ENCODE measurements at regions of chr19 and their contacts with region 1.

Region 1: DNA sequence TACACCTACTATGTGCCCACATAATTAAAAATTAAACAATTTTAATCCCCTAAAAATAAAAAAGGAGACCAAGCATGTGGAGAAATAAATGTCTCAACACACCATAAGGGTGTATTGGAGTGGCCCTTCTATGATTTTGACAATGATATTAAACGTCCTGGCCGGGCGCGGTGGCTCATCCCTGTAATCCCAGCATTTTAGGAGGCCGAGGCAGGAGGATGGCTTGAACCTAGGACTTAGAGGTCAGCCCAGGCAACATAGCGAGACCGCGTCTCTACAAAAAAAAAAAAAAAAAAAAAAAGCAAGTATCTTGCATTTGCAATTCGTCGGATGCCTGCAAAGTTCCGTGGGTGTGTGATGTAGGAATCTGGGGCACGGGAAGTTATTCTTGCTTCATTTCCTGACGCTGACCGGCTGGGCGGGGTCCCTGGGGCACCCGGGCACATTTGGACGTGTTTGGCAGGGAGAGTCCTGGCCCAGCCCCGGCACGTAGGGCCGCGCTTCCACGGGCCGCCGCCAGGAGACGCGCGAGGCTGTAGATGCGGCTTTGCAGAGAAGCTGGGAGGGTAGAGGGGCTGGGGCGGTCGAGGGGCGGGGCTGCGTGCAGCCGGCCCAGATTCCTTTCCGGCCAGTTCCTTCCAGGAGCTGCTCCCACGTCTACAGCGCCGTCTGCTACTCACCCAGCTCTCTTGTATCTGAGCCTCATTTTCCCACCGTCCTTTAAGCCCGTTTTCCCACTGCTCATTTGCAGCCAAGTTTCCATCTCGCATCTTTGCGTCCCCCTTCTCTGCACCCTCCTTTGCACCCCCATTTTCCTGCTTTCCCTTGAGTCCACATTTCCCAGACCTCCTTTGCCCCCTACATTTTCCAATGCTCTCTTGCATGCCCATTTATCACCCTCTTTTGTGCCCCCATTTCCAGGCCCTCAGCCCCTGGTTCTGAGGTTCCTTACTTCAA is 2.2 kb upstream of the TSPAN16 start:
- DNase-seq: peak in 1 of 2 donors; percentile 97
- H3K4me3 ChIP-seq: peak overlapping the region in 1 of 2 donors; percentile 12
- H3K27ac ChIP-seq: peak overlapping the region; percentile 52
- H3K4me1 ChIP-seq: peaks cover 26% of the 10 kb centered on the region
- H3K27me3 ChIP-seq: no peaks in the 10 kb centered on the region
- CTCF ChIP-seq: peak; percentile 97 to 99 (median 97)
- POLR2A ChIP-seq: peak in 1 of 2 donors; percentile 14

Region 2: GRCh38 chr19:11234486-11235075 is 59.1 kb before region 1 on chr19:
- intact Hi-C with region 1: no loop called
- DNase-seq: no peak
- H3K4me3 ChIP-seq: no peak overlapping the region
- H3K27ac ChIP-seq: no peak overlapping the region
- H3K4me1 ChIP-seq: no peaks in the 10 kb centered on the region
- H3K27me3 ChIP-seq: no peaks in the 10 kb centered on the region
- CTCF ChIP-seq: no peak
- POLR2A ChIP-seq: no peak

Region 3: GRCh38 chr19:11380653-11381534 is 87.2 kb after region 1 on chr19:
- intact Hi-C with region 1: loop called (anchors 2 kb)
- DNase-seq: peak in 1 of 2 donors; percentile 97
- H3K4me3 ChIP-seq: peak overlapping the region; percentile 51 to 69
- H3K27ac ChIP-seq: peak overlapping the region; percentile 94
- H3K4me1 ChIP-seq: peaks cover 74% of the 10 kb centered on the region
- H3K27me3 ChIP-seq: no peaks in the 10 kb centered on the region
- CTCF ChIP-seq: peak; percentile 61 to 82 (median 77)
- POLR2A ChIP-seq: peak in 1 of 2 donors; percentile 70

Region 4: DNA sequence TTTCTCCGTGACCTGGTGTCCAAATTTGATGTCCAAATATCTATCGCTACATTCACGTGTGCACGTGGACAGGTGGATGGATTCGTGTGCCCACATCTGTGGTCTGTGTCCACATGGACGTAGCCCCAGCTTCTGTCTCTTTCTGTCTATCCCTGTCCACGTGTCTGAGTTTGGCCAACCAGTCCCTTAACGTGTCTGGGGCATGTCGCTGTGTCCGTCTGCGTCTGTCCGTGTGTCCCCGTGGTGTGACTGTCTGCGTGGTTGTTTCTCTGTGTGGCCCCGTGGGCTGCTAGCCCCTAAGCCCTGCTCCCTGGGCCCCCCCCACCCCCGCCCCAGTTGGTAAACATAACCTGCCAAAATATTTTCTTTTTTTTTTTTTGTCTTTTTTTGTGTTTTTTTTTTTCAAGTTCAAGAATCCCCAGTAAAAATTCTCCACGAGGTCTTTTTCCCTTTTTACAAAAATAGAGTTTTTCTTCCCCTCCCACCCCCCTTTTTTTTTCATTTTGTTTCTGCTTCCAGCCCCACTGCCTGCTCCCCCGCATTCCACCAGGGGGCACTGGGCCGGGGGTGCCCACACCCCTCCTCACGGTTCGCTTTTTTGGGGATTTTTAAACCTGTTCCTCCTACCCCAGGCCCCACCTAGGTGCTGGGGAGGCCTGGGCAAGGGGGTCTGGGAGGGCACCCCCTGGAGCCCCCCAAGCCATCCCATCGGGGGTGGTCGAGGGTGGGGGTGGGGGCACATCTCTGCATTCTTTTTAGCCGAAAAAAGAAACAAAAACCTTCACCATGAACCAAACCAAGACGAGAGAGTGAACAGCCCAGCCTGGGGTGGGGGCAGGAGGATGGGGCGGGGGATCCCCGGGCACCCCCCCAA is 160.0 kb after region 1 on chr19:
- intact Hi-C with region 1: loop called (anchors 10 kb)
- DNase-seq: no peak
- H3K4me3 ChIP-seq: no peak overlapping the region
- H3K27ac ChIP-seq: no peak overlapping the region
- H3K4me1 ChIP-seq: no peaks in the 10 kb centered on the region
- H3K27me3 ChIP-seq: no peaks in the 10 kb centered on the region
- CTCF ChIP-seq: no peak
- POLR2A ChIP-seq: no peak

Region 5: DNA sequence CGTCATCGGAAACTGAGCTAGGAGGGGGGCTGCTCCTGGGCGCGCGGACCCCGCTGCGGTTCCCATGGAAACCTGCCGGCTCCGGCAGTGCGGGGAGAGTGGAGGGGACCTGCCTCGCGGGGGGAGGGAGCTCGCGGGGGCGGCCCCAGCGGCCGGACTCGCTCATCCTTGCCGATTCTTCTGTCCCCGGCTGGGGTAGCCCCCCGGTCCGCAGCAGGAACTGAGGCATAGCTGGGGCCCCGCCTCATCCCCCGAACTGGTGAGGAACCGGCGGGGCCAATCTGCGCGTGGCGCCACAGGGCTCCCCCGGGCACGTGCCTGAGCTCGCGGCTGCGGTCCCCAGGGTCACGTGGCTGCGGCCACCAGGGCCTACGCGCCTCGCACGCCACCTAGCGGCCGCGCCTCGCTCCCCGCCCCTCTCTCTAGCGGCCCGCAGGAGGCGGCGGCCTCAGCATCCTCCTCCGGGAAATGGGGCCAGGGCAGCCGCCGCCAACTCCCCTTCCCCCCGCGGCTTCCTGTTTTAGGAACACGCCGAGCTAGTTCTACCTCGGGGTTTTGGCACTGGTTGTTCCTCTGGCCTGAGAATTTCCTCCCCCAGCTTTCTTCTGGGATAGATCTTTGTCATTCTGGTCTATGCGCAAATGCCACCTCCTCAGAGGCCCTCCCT is 188.8 kb after region 1 on chr19:
- intact Hi-C with region 1: loop called (anchors 10 kb)
- DNase-seq: no peak
- H3K4me3 ChIP-seq: peak overlapping the region; percentile 23 to 28
- H3K27ac ChIP-seq: no peak overlapping the region
- H3K4me1 ChIP-seq: peaks cover 37% of the 10 kb centered on the region
- H3K27me3 ChIP-seq: no peaks in the 10 kb centered on the region
- CTCF ChIP-seq: peak; percentile 87 to 94 (median 90)
- POLR2A ChIP-seq: no peak

Region 6: GRCh38 chr19:11558881-11559828 is 265.4 kb after region 1 on chr19 and contains the start of gene ELOF1:
- intact Hi-C with region 1: no loop called
- DNase-seq: peak in 1 of 2 donors; percentile 97
- H3K4me3 ChIP-seq: peak within 1 kb of the TSS; percentile 58 to 69
- H3K27ac ChIP-seq: peak within 1 kb of the TSS; percentile 66
- H3K4me1 ChIP-seq: peaks cover 43% of the 10 kb centered on the region
- H3K27me3 ChIP-seq: no peaks in the 10 kb centered on the region
- CTCF ChIP-seq: no peak
- POLR2A ChIP-seq: peak in 1 of 2 donors; percentile 53
- total RNA-seq, gene ELOF1: 28.0 TPM

Measured in vagina (tissue), 2 donors.